MCF 10A (cell line): ENCODE measurements at regions of chr11 and their contacts with region 1.

Region 1: DNA sequence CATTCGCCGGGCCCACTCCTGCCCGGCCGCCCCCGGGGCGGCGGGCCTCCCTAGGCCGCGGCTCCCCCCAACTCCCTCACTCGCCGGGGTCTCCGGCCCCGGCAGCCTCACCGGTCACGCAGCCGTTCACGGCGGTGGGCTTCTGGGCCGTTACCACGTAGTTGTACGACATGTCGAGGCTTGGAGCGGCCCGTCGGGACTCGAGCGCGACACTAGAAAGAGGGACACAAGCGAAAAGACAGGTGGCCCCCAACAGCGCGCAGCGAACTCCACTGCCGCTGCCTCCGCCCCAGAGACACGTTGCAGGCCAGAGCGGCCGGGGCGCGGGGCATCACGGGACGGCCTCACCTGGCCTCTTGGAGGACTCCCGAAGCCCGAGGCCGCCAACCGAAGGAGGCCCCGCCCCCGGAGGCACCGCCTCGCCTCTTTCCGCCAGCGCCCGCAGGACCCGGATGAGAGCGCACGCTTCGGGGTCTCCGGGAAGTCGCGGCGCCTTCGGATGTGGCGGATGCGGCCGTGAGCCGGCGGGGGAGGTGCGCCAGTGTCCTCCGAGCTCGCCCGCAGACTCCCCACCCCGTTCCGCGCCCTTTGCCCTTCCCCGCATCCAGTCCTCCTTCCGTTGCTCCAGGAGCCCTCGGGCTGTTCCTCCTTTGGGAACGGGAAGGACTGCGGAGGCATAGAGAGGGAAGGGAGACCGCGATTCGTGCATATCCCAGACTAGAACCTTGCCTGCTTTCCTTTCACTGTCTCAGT is at the starts of genes DDB1 and TKFC:
- DNase-seq: peak; percentile 94
- H3K4me3 Mint-ChIP-seq: peak within 1 kb of the TSS; percentile 93
- H3K27ac Mint-ChIP-seq: peak within 1 kb of the TSS; percentile 98
- H3K4me1 Mint-ChIP-seq: peaks cover 41% of the 10 kb centered on the region
- H3K27me3 Mint-ChIP-seq: no peaks in the 10 kb centered on the region
- CTCF ChIP-seq: no peak
- total RNA-seq, gene DDB1: 172 and 188 TPM in 2 replicates
- total RNA-seq, gene TKFC: 79.7 and 93.7 TPM in 2 replicates

Region 2: DNA sequence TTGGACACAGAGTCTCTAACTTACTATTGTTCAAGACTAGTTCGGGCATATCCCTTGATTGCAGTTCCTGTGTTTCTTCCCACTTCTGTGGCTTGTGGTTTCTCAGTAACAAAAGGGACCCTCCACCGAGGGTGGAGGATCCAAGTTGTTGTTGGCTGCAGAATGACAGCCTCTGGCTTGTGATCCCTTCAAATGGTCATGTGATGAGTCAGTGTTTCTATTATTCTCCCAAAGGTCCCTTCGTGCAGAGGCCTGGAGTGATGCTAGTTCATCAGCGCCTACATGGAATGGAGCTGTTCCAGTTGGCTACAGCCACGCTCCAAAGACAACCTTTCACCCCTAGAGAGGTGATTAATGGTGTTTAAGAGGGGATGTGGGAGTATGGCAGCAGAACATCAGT is 35.2 kb before region 1 on chr11:
- CTCF ChIA-PET with region 1: interaction called, 7 read pairs
- POLR2A ChIA-PET with region 1: interaction called, 27 read pairs
- intact Hi-C with region 1: no loop called
- DNase-seq: peak; percentile 96
- H3K4me3 Mint-ChIP-seq: peak overlapping the region; percentile 35
- H3K27ac Mint-ChIP-seq: peak overlapping the region; percentile 91
- H3K4me1 Mint-ChIP-seq: peaks cover 28% of the 10 kb centered on the region
- H3K27me3 Mint-ChIP-seq: peaks cover 13% of the 10 kb centered on the region
- CTCF ChIP-seq: no peak

Region 3: GRCh38 chr11:61361686-61362541 is 28.9 kb after region 1 on chr11 and contains the starts of genes CYB561A3 and TMEM138:
- CTCF ChIA-PET with region 1: interaction called, 154 read pairs
- POLR2A ChIA-PET with region 1: interaction called, 150 read pairs
- intact Hi-C with region 1: no loop called
- DNase-seq: peak; percentile 92
- H3K4me3 Mint-ChIP-seq: peak within 1 kb of the TSS; percentile 93
- H3K27ac Mint-ChIP-seq: peak within 1 kb of the TSS; percentile 94
- H3K4me1 Mint-ChIP-seq: peaks cover 19% of the 10 kb centered on the region
- H3K27me3 Mint-ChIP-seq: no peaks in the 10 kb centered on the region
- CTCF ChIP-seq: no peak
- total RNA-seq, gene CYB561A3: 28.4 and 28.8 TPM in 2 replicates
- total RNA-seq, gene TMEM138: 39.9 and 46.5 TPM in 2 replicates

Region 4: DNA sequence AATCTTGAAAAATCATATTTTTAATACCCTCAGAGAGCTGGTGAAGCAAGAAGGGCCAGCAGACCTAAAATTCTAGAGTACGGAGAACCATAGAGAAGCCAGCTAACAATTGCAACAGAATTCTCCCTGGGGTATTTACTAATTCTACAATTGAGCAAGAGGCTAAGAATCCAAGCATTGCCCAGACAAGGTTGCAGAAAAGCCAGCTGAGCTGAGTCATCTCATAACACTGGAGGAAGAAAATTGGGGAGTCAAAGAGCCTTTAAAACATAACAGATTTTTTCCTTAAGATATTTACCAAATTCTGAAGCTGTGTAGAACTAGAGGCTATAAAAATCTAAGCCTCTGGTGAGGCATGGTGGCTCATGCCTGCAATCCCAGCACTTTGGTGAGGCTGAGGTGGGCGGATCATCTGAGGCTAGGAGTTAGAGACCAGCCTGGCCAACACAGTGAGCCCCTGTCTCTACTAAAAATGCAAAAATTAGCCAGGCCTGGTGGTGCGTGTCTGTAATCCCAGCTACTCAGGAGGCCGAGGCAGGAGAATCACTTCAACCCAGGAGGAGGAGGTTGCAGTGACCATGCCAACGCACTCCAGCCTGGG is 45.8 kb after region 1 on chr11:
- CTCF ChIA-PET with region 1: interaction called, 439 read pairs
- POLR2A ChIA-PET with region 1: interaction called, 220 read pairs
- intact Hi-C with region 1: no loop called
- DNase-seq: peak; percentile 94
- H3K4me3 Mint-ChIP-seq: no peak overlapping the region
- H3K27ac Mint-ChIP-seq: peak overlapping the region; percentile 86
- H3K4me1 Mint-ChIP-seq: peaks cover 13% of the 10 kb centered on the region
- H3K27me3 Mint-ChIP-seq: no peaks in the 10 kb centered on the region
- CTCF ChIP-seq: no peak

Region 5: GRCh38 chr11:61392981-61393595 is 60.1 kb after region 1 on chr11:
- CTCF ChIA-PET with region 1: interaction called, 439 read pairs
- POLR2A ChIA-PET with region 1: interaction called, 220 read pairs
- intact Hi-C with region 1: no loop called
- DNase-seq: no peak
- H3K4me3 Mint-ChIP-seq: peak overlapping the region; percentile 66
- H3K27ac Mint-ChIP-seq: peak overlapping the region; percentile 54
- H3K4me1 Mint-ChIP-seq: no peaks in the 10 kb centered on the region
- H3K27me3 Mint-ChIP-seq: peaks cover 20% of the 10 kb centered on the region
- CTCF ChIP-seq: no peak

Region 6: GRCh38 chr11:61429691-61430582 is 97.0 kb after region 1 on chr11 and contains the starts of genes CPSF7 and SDHAF2:
- CTCF ChIA-PET with region 1: interaction called, 13 read pairs
- POLR2A ChIA-PET with region 1: interaction called, 10 read pairs
- intact Hi-C with region 1: no loop called
- DNase-seq: peak; percentile 93
- H3K4me3 Mint-ChIP-seq: peak within 1 kb of the TSS; percentile 98
- H3K27ac Mint-ChIP-seq: peak within 1 kb of the TSS; percentile 99
- H3K4me1 Mint-ChIP-seq: no peaks in the 10 kb centered on the region
- H3K27me3 Mint-ChIP-seq: no peaks in the 10 kb centered on the region
- CTCF ChIP-seq: no peak
- total RNA-seq, gene CPSF7: 99.9 and 111 TPM in 2 replicates
- total RNA-seq, gene SDHAF2: 30.1 and 34.6 TPM in 2 replicates